ENCODE measurements at regions of chr5 and their contacts with region 1.

Region 1: GRCh38 chr5:7745882-7746610 is 104.9 kb downstream of the CFAP90 start:
- DNase-seq: peak; percentile 79
- H3K4me3 Mint-ChIP-seq: no peak overlapping the region
- H3K27ac Mint-ChIP-seq: no peak overlapping the region
- H3K4me1 Mint-ChIP-seq: no peaks in the 10 kb centered on the region
- H3K27me3 Mint-ChIP-seq: peaks cover 47% of the 10 kb centered on the region
- CTCF ChIP-seq: peak; percentile 67

Region 2: DNA sequence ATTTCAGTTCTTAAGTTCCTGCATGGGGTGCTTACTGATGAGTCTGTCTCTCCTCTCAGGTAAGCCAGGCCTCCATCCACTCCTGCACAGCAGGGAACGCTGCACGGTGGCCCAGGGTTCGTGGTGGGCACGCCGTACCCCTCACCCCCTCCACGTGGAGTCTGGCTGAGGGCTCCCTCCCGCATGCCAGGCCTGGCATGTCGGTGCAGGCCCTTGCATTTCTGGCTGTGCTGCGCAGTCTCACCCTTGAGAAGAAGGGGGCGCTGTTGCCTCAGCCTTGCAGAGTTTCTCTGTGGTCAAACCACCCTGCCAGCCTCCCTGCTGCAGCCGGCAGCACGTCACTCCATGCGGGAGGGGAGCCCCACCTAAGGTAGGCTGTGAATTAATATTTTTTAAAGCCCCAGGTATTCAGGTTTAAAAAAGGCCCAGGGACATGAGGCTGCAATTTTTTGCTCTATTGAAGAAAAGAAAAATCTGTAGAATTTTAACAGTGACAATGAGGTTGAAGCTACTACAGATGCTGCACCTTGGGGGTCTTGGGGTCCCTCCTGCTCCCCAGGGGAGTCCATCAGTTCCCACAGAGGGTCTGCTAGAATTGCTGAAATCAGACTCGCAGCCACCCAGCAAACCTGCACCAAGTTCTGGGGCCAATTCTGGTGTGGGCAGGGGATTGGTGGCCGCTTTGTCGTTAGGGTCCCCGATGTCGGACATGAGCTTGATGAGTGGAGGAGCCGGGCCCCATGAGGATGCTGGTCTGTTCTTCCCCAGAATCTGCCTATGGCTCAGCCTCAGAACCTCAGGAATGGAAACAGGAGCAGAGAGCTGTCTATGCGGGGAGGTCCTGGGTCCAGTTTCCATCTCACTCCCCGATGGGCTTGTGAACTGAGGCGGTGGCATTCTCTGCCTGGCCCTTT is 980.2 kb before region 1 on chr5:
- CTCF ChIA-PET with region 1: no interaction called
- intact Hi-C with region 1: loop called (anchors 2 kb)
- DNase-seq: peak; percentile 91
- H3K4me3 Mint-ChIP-seq: peak overlapping the region; percentile 48
- H3K27ac Mint-ChIP-seq: peak overlapping the region; percentile 20
- H3K4me1 Mint-ChIP-seq: peaks cover 20% of the 10 kb centered on the region
- H3K27me3 Mint-ChIP-seq: no peaks in the 10 kb centered on the region
- CTCF ChIP-seq: peak; percentile 88

Region 3: DNA sequence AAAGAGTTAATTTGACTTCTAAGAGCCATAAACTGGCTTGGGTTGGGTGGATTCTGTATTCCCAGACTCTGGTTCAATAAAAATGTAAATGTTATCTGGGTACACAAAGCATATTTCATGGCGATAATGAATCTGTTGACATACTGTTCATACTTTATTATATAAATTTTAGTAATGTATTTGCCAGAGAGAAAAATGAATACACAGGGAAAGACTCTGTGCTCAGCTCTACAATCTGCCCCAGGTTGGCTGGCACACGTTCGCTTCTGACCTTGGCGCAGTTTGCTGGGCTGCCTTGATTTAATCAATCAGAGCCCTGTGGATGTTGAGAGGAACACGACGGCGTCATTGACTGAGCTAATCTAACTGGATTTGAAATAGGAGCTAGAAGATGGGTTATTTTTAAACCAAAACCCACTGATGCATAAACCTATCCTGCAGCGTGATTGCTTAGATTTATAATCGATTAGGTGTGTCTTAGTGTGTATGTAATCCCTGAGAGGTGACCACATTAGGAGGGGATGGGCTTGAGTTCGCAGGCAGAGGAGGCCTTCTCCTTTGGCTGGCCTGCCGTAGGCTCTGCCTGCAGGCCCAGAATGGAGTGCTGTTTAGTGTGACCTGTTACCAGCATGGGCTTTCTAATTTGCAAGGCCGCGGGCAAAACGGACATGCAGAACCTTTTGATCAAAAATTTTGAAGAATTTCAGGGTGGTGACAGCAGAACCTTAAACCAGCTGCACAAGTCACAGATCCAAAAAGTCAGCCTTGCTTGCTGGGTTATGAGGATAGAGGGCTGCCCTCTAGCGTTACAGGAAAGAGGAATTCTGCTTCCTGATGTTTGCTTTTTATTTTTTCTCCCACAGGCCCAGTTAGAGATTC is 354.0 kb before region 1 on chr5:
- CTCF ChIA-PET with region 1: no interaction called
- intact Hi-C with region 1: loop called (anchors 5 kb)
- DNase-seq: peak; percentile 18
- H3K4me3 Mint-ChIP-seq: no peak overlapping the region
- H3K27ac Mint-ChIP-seq: no peak overlapping the region
- H3K4me1 Mint-ChIP-seq: no peaks in the 10 kb centered on the region
- H3K27me3 Mint-ChIP-seq: peaks cover 9% of the 10 kb centered on the region
- CTCF ChIP-seq: no peak

Region 4: GRCh38 chr5:7650755-7651154 is 95.3 kb before region 1 on chr5:
- CTCF ChIA-PET with region 1: no interaction called
- intact Hi-C with region 1: no loop called
- DNase-seq: no peak
- H3K4me3 Mint-ChIP-seq: no peak overlapping the region
- H3K27ac Mint-ChIP-seq: no peak overlapping the region
- H3K4me1 Mint-ChIP-seq: no peaks in the 10 kb centered on the region
- H3K27me3 Mint-ChIP-seq: no peaks in the 10 kb centered on the region
- CTCF ChIP-seq: no peak

Measured in Calu3 (cell line).